ENCODE measurements at regions of chr1 and their contacts with region 1.

Region 1: GRCh38 chr1:174815474-174815908 is 184.3 kb upstream of the CACYBP start:
- DNase-seq: no peak
- H3K4me3 ChIP-seq: no peak overlapping the region
- H3K27ac ChIP-seq: 0 out of 2 replicates have a peak overlapping the region, but pooled peaks have one; percentile 41
- H3K4me1 ChIP-seq: peaks cover 20% of the 10 kb centered on the region
- H3K27me3 ChIP-seq: no peaks in the 10 kb centered on the region
- CTCF ChIP-seq: no peak

Region 2: DNA sequence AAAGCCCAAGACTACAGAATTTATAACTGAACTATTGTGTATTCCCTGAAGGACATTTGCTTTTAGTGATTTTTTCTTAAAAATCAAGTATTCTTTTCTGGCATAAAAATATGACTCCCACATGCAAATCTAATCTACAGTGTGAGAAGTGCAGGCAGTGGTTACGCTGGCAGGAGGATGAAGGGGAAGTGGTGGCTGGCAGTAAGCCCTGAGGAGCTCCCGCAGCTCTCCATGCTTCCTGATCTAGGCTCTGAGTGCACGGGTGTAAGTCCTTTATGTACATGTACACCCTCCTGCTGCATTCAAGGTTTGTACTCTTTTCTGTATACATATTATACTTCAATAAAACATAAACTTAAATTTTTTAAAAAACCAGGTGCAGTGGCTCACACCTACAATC is 1405.9 kb before region 1 on chr1:
- CTCF ChIA-PET with region 1: interaction called, 11 read pairs
- POLR2A ChIA-PET with region 1: no interaction called
- intact Hi-C with region 1: no loop called
- DNase-seq: no peak
- H3K4me3 ChIP-seq: no peak overlapping the region
- H3K27ac ChIP-seq: no peak overlapping the region
- H3K4me1 ChIP-seq: peaks cover 22% of the 10 kb centered on the region
- H3K27me3 ChIP-seq: no peaks in the 10 kb centered on the region
- CTCF ChIP-seq: no peak

Region 3: DNA sequence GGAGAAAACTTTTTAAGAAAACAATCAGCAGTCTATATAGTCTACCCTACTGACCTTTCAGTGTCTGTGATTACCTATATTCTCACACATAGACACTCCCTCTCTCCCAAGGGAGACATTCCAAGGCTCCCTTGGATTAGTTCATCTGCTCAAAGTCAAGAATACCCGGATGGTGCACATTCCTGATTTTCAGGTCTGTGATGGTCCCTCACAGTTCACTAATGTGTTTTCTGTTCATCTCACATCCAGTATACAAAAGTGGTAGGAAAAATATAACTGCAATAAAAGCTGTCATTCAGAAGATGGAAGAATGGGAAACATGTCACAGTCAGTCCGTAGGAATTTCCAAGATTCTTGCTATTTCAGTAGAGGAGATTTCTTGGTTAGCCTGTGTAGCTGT is 39.9 kb before region 1 on chr1:
- CTCF ChIA-PET with region 1: no interaction called
- POLR2A ChIA-PET with region 1: no interaction called
- intact Hi-C with region 1: no loop called
- DNase-seq: no peak
- H3K4me3 ChIP-seq: no peak overlapping the region
- H3K27ac ChIP-seq: no peak overlapping the region
- H3K4me1 ChIP-seq: no peaks in the 10 kb centered on the region
- H3K27me3 ChIP-seq: no peaks in the 10 kb centered on the region
- CTCF ChIP-seq: no peak

Region 4: GRCh38 chr1:174883409-174883808 is 67.9 kb after region 1 on chr1:
- CTCF ChIA-PET with region 1: interaction called, 17 read pairs
- POLR2A ChIA-PET with region 1: no interaction called
- intact Hi-C with region 1: no loop called
- DNase-seq: peak; percentile 12 to 73
- H3K4me3 ChIP-seq: no peak overlapping the region
- H3K27ac ChIP-seq: no peak overlapping the region
- H3K4me1 ChIP-seq: peaks cover 7% of the 10 kb centered on the region; the same call in 1 of the 2 replicates
- H3K27me3 ChIP-seq: no peaks in the 10 kb centered on the region
- CTCF ChIP-seq: peak; percentile 55

Region 5: DNA sequence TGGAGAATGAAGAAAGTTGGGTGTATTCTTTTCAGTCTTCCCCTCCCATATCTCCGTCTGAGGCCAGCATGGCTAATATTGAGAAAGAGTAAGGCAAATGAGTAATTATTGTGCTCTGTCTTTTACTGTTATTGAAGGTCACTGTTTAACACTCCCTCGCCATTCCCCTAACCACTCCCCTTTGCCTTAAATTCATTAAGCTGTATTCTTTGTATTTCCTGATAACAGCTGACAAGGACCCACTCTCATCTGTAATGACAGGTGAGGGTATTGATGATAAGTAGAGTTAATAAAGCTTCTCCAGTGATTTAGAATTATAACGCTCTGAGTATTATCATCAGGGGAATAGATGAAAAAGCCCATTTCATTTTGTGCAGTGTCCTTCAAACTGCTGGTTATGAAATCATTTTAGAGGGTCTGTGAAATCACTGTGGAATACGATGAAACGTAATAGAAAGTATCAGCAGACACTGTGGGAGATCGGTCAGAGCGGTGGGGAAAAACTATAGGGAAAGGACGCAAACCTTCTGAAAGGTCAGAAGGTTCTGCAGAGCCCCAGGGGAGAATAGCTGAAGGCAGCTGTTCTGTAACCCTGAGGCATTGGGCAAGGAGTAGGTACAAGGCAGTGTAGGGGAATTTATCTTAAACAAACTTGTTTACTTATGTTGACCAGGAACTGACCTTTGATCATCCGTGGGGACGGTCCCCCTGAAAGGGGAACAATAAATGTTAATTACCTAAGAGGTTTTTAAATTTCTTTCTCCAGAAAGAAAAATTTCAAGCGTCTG is 138.0 kb after region 1 on chr1:
- CTCF ChIA-PET with region 1: no interaction called
- POLR2A ChIA-PET with region 1: interaction called, 31 read pairs
- intact Hi-C with region 1: no loop called
- DNase-seq: peak in 1 of 2 experiments; percentile 79
- H3K4me3 ChIP-seq: no peak overlapping the region
- H3K27ac ChIP-seq: peak overlapping the region; percentile 46
- H3K4me1 ChIP-seq: peaks cover 28% of the 10 kb centered on the region
- H3K27me3 ChIP-seq: no peaks in the 10 kb centered on the region
- CTCF ChIP-seq: no peak

Region 6: GRCh38 chr1:175023043-175023921 is 207.8 kb after region 1 on chr1 and contains the start of gene MRPS14:
- CTCF ChIA-PET with region 1: no interaction called
- POLR2A ChIA-PET with region 1: interaction called, 11 read pairs
- intact Hi-C with region 1: no loop called
- DNase-seq: peak; percentile 88 to 96
- H3K4me3 ChIP-seq: peak within 1 kb of the TSS; percentile 95
- H3K27ac ChIP-seq: peak within 1 kb of the TSS; percentile 82
- H3K4me1 ChIP-seq: peaks cover 12% of the 10 kb centered on the region; the same call in 1 of the 2 replicates
- H3K27me3 ChIP-seq: no peaks in the 10 kb centered on the region
- CTCF ChIP-seq: no peak
- total RNA-seq, gene MRPS14: 24.1 and 28.8 TPM in 2 replicates

Region 7: GRCh38 chr1:175035865-175036264 is 220.4 kb after region 1 on chr1:
- CTCF ChIA-PET with region 1: no interaction called
- POLR2A ChIA-PET with region 1: no interaction called
- intact Hi-C with region 1: no loop called
- DNase-seq: no peak
- H3K4me3 ChIP-seq: no peak overlapping the region
- H3K27ac ChIP-seq: no peak overlapping the region
- H3K4me1 ChIP-seq: peaks cover 31% of the 10 kb centered on the region
- H3K27me3 ChIP-seq: no peaks in the 10 kb centered on the region
- CTCF ChIP-seq: no peak